MCF 10A (cell line): ENCODE measurements at regions of chr11 and their contacts with region 1.

Region 1: GRCh38 chr11:9506489-9507276 is 45.9 kb downstream of the ZNF143 start:
- DNase-seq: peak; percentile 82
- H3K4me3 Mint-ChIP-seq: no peak overlapping the region
- H3K27ac Mint-ChIP-seq: peak overlapping the region; percentile 16
- H3K4me1 Mint-ChIP-seq: peaks cover 17% of the 10 kb centered on the region
- H3K27me3 Mint-ChIP-seq: no peaks in the 10 kb centered on the region
- CTCF ChIP-seq: peak; percentile 74

Region 2: DNA sequence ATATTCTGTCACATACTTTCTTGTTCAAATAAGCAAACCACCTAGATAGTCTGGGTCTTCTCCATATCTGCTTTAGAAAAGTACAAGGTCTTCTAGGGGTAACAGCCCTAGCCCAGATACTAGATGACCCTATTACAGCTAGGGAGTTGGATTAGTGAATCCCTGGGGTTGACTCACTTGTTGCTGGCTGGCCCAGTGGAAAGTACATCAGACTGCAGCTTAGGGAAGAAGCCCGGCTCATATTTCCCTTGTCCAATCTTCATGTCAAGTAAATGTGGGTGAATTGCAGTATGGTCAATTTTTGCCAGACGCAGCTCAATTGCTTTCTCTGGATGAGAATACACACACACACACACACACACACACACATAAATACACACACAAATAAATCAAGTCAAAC is 336.2 kb before region 1 on chr11:
- CTCF ChIA-PET with region 1: interaction called, 6 read pairs
- POLR2A ChIA-PET with region 1: no interaction called
- intact Hi-C with region 1: loop called (anchors 1 kb)
- DNase-seq: peak; percentile 8
- H3K4me3 Mint-ChIP-seq: no peak overlapping the region
- H3K27ac Mint-ChIP-seq: no peak overlapping the region
- H3K4me1 Mint-ChIP-seq: peaks cover 11% of the 10 kb centered on the region
- H3K27me3 Mint-ChIP-seq: no peaks in the 10 kb centered on the region
- CTCF ChIP-seq: no peak

Region 3: GRCh38 chr11:9473408-9473807 is 33.3 kb before region 1 on chr11:
- CTCF ChIA-PET with region 1: interaction called, 18 read pairs
- POLR2A ChIA-PET with region 1: no interaction called
- intact Hi-C with region 1: no loop called
- DNase-seq: no peak
- H3K4me3 Mint-ChIP-seq: no peak overlapping the region
- H3K27ac Mint-ChIP-seq: no peak overlapping the region
- H3K4me1 Mint-ChIP-seq: no peaks in the 10 kb centered on the region
- H3K27me3 Mint-ChIP-seq: no peaks in the 10 kb centered on the region
- CTCF ChIP-seq: no peak

Region 4: DNA sequence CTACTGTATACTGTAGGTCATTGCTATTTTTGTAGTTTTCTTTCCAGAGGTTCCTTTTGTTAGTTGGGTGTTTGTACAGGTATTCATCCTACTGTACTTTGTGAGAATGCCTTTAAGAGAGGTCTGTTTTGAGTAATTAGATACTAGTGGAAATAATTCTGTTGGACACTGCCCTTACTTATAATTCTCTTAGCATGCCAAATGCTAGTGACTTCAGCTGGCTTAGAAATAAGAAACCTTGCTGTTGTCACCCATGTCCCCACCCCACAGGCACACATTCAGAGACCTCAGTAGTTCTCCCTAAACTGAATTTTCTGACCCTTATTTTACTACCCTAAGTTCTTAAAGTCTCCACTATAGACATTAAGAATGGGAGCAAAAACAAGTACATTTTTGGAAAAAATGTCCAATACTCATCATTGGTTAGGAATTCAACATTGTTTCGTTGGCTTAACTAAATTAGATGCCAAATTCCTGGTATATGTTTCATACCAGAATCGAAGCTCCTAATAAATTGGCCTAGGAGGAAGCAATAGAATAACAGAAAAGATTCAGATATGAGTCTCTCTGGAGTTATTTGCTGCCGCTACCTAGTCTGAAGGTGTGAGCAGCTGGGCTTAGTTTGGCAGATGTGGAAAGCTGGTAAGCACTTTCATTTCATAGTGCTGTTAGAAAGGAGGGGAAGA is 17.5 kb before region 1 on chr11:
- CTCF ChIA-PET with region 1: interaction called, 24 read pairs
- POLR2A ChIA-PET with region 1: no interaction called
- intact Hi-C with region 1: no loop called
- DNase-seq: no peak
- H3K4me3 Mint-ChIP-seq: no peak overlapping the region
- H3K27ac Mint-ChIP-seq: peak overlapping the region; percentile 76
- H3K4me1 Mint-ChIP-seq: peaks cover 9% of the 10 kb centered on the region
- H3K27me3 Mint-ChIP-seq: no peaks in the 10 kb centered on the region
- CTCF ChIP-seq: no peak

Region 5: GRCh38 chr11:9565822-9566560 is 59.3 kb after region 1 on chr11:
- CTCF ChIA-PET with region 1: no interaction called
- POLR2A ChIA-PET with region 1: interaction called, 11 read pairs
- intact Hi-C with region 1: no loop called
- DNase-seq: peak; percentile 99
- H3K4me3 Mint-ChIP-seq: no peak overlapping the region
- H3K27ac Mint-ChIP-seq: peak overlapping the region; percentile 100
- H3K4me1 Mint-ChIP-seq: peaks cover 43% of the 10 kb centered on the region
- H3K27me3 Mint-ChIP-seq: no peaks in the 10 kb centered on the region
- CTCF ChIP-seq: no peak

Region 6: DNA sequence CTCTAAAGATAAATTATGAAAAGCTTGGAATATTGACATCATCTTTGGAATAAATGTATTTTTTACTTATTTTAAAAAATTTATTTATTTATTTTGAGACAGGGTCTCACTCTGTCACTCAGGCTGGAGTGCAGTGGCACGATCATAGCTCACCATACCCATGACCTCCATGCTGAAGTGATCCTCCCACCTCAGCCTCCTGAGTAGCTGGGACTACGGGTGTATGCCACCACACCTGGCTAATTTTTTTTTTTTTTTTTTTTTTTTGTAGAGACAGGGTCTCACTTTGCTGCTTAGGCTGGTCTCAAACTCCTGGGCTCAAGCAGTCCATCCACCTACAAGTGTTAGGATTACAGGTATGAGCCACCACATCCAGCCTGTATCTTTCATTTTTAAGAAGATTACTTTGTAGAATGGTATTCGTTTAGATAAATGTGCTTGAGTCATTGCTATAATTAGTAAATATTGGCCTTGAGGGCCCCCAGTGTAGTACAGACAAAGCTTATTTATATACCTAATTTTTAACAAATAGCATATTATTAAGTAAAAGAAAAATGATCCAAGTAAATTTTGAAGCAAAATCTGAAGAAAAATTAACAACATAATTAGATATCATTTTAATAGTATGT is 165.7 kb after region 1 on chr11:
- CTCF ChIA-PET with region 1: no interaction called
- POLR2A ChIA-PET with region 1: no interaction called
- intact Hi-C with region 1: no loop called
- DNase-seq: no peak
- H3K4me3 Mint-ChIP-seq: no peak overlapping the region
- H3K27ac Mint-ChIP-seq: no peak overlapping the region
- H3K4me1 Mint-ChIP-seq: no peaks in the 10 kb centered on the region
- H3K27me3 Mint-ChIP-seq: no peaks in the 10 kb centered on the region
- CTCF ChIP-seq: no peak

Region 7: DNA sequence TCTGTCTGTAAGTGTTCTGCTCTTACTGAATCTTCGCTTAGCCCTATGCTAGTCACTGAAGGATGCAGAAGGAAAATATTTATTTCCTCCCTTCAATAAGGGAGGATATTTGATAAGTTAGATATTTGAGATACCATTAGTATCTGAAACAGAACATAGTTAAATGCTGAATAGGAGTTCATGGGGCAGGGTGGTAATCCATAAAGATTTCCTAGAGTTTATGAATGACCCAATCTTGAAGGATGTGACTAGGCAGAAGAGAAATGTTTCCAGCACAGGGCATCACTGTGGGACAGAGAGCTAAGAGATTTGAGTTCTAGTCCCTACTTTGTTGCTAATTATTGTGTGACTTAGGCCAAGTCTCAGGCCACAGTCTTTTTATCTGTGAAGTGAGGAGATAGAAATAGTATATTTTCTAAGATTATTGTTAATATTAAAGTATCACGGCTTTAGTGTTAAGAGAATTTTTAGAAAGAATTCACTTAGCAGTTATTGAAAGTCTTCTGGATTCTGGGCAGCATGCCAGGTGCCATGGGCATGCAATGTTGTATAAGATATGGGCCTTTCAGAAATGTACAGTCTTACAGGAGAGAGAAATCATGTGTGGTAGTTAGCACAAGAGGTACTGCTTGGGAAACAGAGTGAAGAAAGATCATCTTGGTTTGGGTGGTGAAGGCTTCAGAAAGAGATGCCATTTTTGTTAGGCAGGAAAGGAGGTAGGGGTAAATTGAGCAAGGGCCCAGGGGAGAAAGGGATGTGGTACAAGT is 181.2 kb after region 1 on chr11:
- CTCF ChIA-PET with region 1: no interaction called
- POLR2A ChIA-PET with region 1: no interaction called
- intact Hi-C with region 1: no loop called
- DNase-seq: no peak
- H3K4me3 Mint-ChIP-seq: no peak overlapping the region
- H3K27ac Mint-ChIP-seq: no peak overlapping the region
- H3K4me1 Mint-ChIP-seq: peaks cover 9% of the 10 kb centered on the region
- H3K27me3 Mint-ChIP-seq: no peaks in the 10 kb centered on the region
- CTCF ChIP-seq: no peak

Region 8: DNA sequence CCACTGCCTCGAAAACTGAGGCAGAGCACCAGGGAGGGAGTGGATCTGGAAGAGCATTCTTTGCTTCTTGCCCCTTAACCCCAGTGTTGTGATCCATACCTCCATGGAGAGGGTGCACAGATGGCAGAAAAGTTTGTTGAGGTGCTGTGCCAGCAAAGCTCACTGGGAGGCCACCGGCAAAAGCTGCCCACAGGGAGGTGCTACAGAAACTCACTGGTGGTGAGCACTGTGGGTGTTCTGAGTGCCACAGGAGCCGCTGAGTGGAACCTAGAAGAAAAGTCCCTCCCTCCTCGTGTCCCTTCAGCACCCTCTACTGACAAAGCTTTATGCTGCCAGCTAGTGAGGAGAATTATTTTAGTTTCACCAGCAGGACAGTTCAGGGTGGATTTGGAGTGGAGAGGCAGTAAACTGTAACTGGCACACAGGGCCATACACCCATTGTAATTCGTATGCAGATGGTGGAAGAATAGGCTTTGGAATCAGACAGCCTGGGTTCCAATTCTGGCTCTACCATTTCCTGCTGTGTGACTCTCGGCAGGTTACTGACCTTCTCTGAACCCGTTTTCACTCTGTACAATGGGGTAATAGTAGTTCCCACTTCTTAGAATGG is 241.8 kb after region 1 on chr11:
- CTCF ChIA-PET with region 1: interaction called, 15 read pairs
- POLR2A ChIA-PET with region 1: no interaction called
- intact Hi-C with region 1: no loop called
- DNase-seq: peak; percentile 75
- H3K4me3 Mint-ChIP-seq: no peak overlapping the region
- H3K27ac Mint-ChIP-seq: no peak overlapping the region
- H3K4me1 Mint-ChIP-seq: peaks cover 6% of the 10 kb centered on the region
- H3K27me3 Mint-ChIP-seq: no peaks in the 10 kb centered on the region
- CTCF ChIP-seq: peak; percentile 90

Region 9: DNA sequence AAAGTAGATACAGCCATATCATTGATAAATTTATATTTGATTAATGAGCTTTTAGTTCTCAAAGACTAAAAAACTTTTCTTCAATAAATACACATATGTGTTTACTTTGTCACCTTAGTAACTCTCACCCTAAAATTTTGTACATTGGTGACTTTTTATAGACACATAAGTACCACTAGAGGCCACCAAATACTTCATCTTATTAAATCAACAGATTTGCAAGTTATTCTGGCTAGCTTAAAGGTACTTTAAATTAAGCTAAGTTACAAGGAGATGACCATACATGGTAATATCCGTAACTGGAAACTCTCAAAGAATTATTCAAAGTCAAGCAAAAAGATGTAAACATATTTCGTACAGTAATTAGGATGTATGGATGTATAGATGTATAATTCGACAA is 675.1 kb after region 1 on chr11:
- CTCF ChIA-PET with region 1: no interaction called
- POLR2A ChIA-PET with region 1: no interaction called
- intact Hi-C with region 1: no loop called
- DNase-seq: peak; percentile 30
- H3K4me3 Mint-ChIP-seq: no peak overlapping the region
- H3K27ac Mint-ChIP-seq: no peak overlapping the region
- H3K4me1 Mint-ChIP-seq: peaks cover 7% of the 10 kb centered on the region
- H3K27me3 Mint-ChIP-seq: no peaks in the 10 kb centered on the region
- CTCF ChIP-seq: peak; percentile 28